ENCODE measurements at regions of chr12 and their contacts with region 1.

Region 1: GRCh38 chr12:13211859-13212664 is 15.5 kb downstream of the EMP1 start:
- DNase-seq: peak; percentile 53
- ATAC-seq: peak; percentile 57
- H3K4me3 ChIP-seq: no peak overlapping the region; a peak in 1 of 4 replicates
- H3K27ac ChIP-seq: peak overlapping the region; percentile 4; the same call in 1 of the 2 replicates
- H3K4me1 ChIP-seq: peaks cover 34 to 52% of the 10 kb centered on the region in 2 experiments
- H3K27me3 ChIP-seq: no peaks in the 10 kb centered on the region
- CTCF ChIP-seq: peak; percentile 75 to 82 (median 75)
- POLR2A ChIP-seq: no peak
- RAD21 ChIP-seq: peak; percentile 84

Region 2: GRCh38 chr12:12803186-12803585 is 408.9 kb before region 1 on chr12:
- CTCF ChIA-PET with region 1: no interaction called
- POLR2A ChIA-PET with region 1: no interaction called
- RAD21 ChIA-PET with region 1: no interaction called
- intact Hi-C with region 1: loop called (anchors 10 kb)
- DNase-seq: peak; percentile 92
- ATAC-seq: peak; percentile 94
- H3K4me3 ChIP-seq: peak overlapping the region in 1 of 2 experiments; percentile 45; a peak in 2 of 4 replicates
- H3K27ac ChIP-seq: peak overlapping the region; percentile 40; the same call in 1 of the 2 replicates
- H3K4me1 ChIP-seq: peaks cover 34 to 64% of the 10 kb centered on the region in 2 experiments
- H3K27me3 ChIP-seq: no peaks in the 10 kb centered on the region
- CTCF ChIP-seq: no peak
- POLR2A ChIP-seq: no peak
- RAD21 ChIP-seq: peak; percentile 18; the same call in 1 of the 2 replicates

Region 3: GRCh38 chr12:12983420-12984035 is 228.5 kb before region 1 on chr12:
- CTCF ChIA-PET with region 1: interaction called, 16 read pairs
- POLR2A ChIA-PET with region 1: no interaction called
- RAD21 ChIA-PET with region 1: interaction called, 5 to 6 read pairs
- intact Hi-C with region 1: loop called (anchors 2 kb)
- DNase-seq: peak; percentile 33
- ATAC-seq: peak; percentile 81
- H3K4me3 ChIP-seq: no peak overlapping the region
- H3K27ac ChIP-seq: no peak overlapping the region
- H3K4me1 ChIP-seq: no peaks in the 10 kb centered on the region
- H3K27me3 ChIP-seq: no peaks in the 10 kb centered on the region
- CTCF ChIP-seq: peak; percentile 59 to 79 (median 69); a peak in 5 of 6 replicates
- POLR2A ChIP-seq: no peak
- RAD21 ChIP-seq: peak; percentile 85

Region 4: GRCh38 chr12:13023811-13024530 is 188.1 kb before region 1 on chr12:
- CTCF ChIA-PET with region 1: interaction called, 19 read pairs
- POLR2A ChIA-PET with region 1: interaction called, 5 read pairs
- RAD21 ChIA-PET with region 1: no interaction called
- intact Hi-C with region 1: loop called (anchors 1 kb)
- DNase-seq: peak; percentile 28
- ATAC-seq: peak; percentile 87
- H3K4me3 ChIP-seq: no peak overlapping the region
- H3K27ac ChIP-seq: no peak overlapping the region
- H3K4me1 ChIP-seq: no peaks in the 10 kb centered on the region
- H3K27me3 ChIP-seq: no peaks in the 10 kb centered on the region
- CTCF ChIP-seq: peak; percentile 46 to 58 (median 46); a peak in 5 of 6 replicates
- POLR2A ChIP-seq: no peak
- RAD21 ChIP-seq: peak; percentile 71

Region 5: GRCh38 chr12:13255792-13256691 is 44.0 kb after region 1 on chr12:
- CTCF ChIA-PET with region 1: interaction called, 10 read pairs
- POLR2A ChIA-PET with region 1: no interaction called
- RAD21 ChIA-PET with region 1: no interaction called
- intact Hi-C with region 1: no loop called
- DNase-seq: peak; percentile 89
- ATAC-seq: peak; percentile 100
- H3K4me3 ChIP-seq: peak overlapping the region in 1 of 2 experiments; percentile 13; a peak in 1 of 4 replicates
- H3K27ac ChIP-seq: no peak overlapping the region
- H3K4me1 ChIP-seq: peaks cover 0 to 15% of the 10 kb centered on the region in 2 experiments; a peak in 2 of 4 replicates
- H3K27me3 ChIP-seq: no peaks in the 10 kb centered on the region
- CTCF ChIP-seq: peak; percentile 91 to 98 (median 97)
- POLR2A ChIP-seq: no peak
- RAD21 ChIP-seq: peak; percentile 98

Region 6: GRCh38 chr12:13718271-13718670 is 506.2 kb after region 1 on chr12:
- CTCF ChIA-PET with region 1: no interaction called
- POLR2A ChIA-PET with region 1: no interaction called
- RAD21 ChIA-PET with region 1: no interaction called
- intact Hi-C with region 1: no loop called
- DNase-seq: no peak
- ATAC-seq: no peak
- H3K4me3 ChIP-seq: no peak overlapping the region
- H3K27ac ChIP-seq: no peak overlapping the region
- H3K4me1 ChIP-seq: peaks cover 0 to 2% of the 10 kb centered on the region in 2 experiments; a peak in 2 of 4 replicates
- H3K27me3 ChIP-seq: no peaks in the 10 kb centered on the region
- CTCF ChIP-seq: no peak
- POLR2A ChIP-seq: no peak
- RAD21 ChIP-seq: no peak

Measured in HCT116 (cell line).